Activated B cell treated with CpG ODN at 0.5 μM for 24 hours (primary cell): ENCODE measurements at regions of chr9 and their contacts with region 1.

Region 1: DNA sequence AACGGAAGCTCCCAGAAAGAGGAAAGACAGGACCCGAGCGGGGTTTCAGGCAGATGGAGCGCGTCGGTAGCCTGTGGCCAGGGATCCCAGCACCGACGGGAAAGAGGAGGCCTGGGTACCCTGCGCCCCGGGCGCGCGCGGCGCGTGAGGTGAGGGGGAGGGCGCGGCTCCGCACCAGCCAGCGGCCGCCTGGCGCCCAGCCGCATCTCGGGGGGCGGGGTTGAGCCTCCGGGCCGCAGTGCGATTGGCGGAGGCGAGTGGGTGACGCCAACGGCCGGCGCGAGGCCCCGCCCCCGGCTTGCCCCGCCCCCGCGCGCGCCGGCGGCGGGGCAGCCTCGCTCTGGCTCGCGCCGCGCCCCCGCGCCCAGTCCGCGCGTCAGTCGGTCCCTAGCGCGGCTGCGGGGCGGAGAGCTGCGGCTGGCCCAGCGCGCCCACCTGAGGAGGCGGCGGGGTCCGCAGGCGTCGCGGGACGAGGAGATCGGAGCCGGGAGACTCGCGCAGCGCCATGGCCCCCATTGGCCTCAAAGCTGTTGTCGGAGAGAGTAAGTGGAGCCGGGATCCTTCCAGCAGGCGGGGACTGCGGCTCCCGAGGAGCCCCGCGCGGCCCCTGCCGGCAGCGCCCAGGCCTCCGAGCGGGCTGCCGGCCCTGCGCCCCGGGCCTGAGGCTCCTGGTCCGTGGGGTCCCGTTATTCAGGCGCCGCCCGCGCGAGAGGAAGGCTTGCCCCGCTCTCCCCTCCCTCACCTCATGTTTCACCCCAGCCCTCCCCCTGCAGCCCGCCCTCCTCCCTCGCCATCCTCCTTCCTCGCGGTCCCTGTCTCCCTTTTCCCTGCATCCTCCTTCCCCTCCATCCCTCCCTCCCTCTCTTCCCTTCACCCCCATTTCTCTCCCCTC is at the start of gene STXBP1:
- DNase-seq: peak; percentile 88
- ATAC-seq: peak; percentile 92
- H3K4me3 Mint-ChIP-seq: peak within 1 kb of the TSS; percentile 90
- H3K27ac Mint-ChIP-seq: peak within 1 kb of the TSS; percentile 56
- H3K4me1 Mint-ChIP-seq: peaks cover 25% of the 10 kb centered on the region
- H3K27me3 Mint-ChIP-seq: peaks cover 37% of the 10 kb centered on the region
- CTCF ChIP-seq: no peak
- total RNA-seq, gene STXBP1: 0.20 and 0.73 TPM in 2 replicates

Region 2: GRCh38 chr9:127568971-127569885 is 42.9 kb before region 1 on chr9:
- CTCF ChIA-PET with region 1: no interaction called
- POLR2A ChIA-PET with region 1: no interaction called
- intact Hi-C with region 1: loop called (anchors 5 kb)
- DNase-seq: peak; percentile 68
- ATAC-seq: peak; percentile 93
- H3K4me3 Mint-ChIP-seq: peak overlapping the region; percentile 86
- H3K27ac Mint-ChIP-seq: peak overlapping the region; percentile 43
- H3K4me1 Mint-ChIP-seq: peaks cover 11% of the 10 kb centered on the region
- H3K27me3 Mint-ChIP-seq: no peaks in the 10 kb centered on the region
- CTCF ChIP-seq: no peak

Region 3: GRCh38 chr9:127676636-127677035 is 64.5 kb after region 1 on chr9:
- CTCF ChIA-PET with region 1: no interaction called
- POLR2A ChIA-PET with region 1: no interaction called
- intact Hi-C with region 1: no loop called
- DNase-seq: no peak
- ATAC-seq: no peak
- H3K4me3 Mint-ChIP-seq: no peak overlapping the region
- H3K27ac Mint-ChIP-seq: no peak overlapping the region
- H3K4me1 Mint-ChIP-seq: no peaks in the 10 kb centered on the region
- H3K27me3 Mint-ChIP-seq: peaks cover 14% of the 10 kb centered on the region
- CTCF ChIP-seq: no peak

Region 4: GRCh38 chr9:127715394-127716337 is 103.5 kb after region 1 on chr9 and contains the starts of genes PTRH1 and TTC16:
- CTCF ChIA-PET with region 1: no interaction called
- POLR2A ChIA-PET with region 1: interaction called, 3 read pairs
- intact Hi-C with region 1: loop called (anchors 1 kb)
- DNase-seq: peak; percentile 97
- ATAC-seq: peak; percentile 96
- H3K4me3 Mint-ChIP-seq: peak within 1 kb of the TSS; percentile 100
- H3K27ac Mint-ChIP-seq: peak within 1 kb of the TSS; percentile 92
- H3K4me1 Mint-ChIP-seq: peaks cover 21% of the 10 kb centered on the region
- H3K27me3 Mint-ChIP-seq: no peaks in the 10 kb centered on the region
- CTCF ChIP-seq: no peak
- total RNA-seq, gene PTRH1: 12.7 and 13.8 TPM in 2 replicates
- total RNA-seq, gene TTC16: not detected in 2 replicates

Region 5: DNA sequence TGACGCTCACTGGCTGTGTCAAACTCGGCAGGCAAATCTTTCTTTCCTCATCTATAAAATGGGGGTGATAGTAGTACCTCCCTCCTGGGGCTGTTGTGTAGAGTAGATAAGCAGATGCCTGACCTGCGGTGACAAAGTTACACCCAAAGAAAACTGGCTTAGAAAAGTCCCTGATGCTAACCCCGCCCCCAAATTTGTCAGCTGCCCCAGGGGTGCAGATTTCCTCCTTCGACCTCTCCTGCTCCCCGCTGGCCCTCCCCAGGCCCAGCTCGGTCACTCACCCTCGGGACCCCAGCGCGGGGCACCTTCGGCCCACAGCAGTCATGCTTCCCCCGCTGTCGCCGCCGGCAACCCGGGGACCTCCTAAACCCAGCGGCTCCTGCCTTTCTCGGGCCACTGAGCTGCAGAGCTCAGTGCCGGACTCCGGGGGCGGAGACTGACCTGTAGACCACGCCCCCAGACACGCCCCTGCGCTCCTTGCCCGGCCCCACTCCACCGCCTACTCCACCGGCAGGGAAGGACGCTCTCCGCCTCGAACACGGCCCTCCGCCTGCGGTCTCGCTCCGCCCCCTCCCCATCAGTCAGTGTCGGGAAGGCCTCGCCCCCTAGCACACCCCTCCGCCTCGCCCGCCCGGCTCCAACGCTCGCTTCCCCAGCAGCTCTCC is 158.9 kb after region 1 on chr9:
- CTCF ChIA-PET with region 1: no interaction called
- POLR2A ChIA-PET with region 1: no interaction called
- intact Hi-C with region 1: loop called (anchors 5 kb)
- DNase-seq: peak; percentile 98
- ATAC-seq: peak; percentile 90
- H3K4me3 Mint-ChIP-seq: peak overlapping the region; percentile 93
- H3K27ac Mint-ChIP-seq: peak overlapping the region; percentile 93
- H3K4me1 Mint-ChIP-seq: peaks cover 72% of the 10 kb centered on the region
- H3K27me3 Mint-ChIP-seq: no peaks in the 10 kb centered on the region
- CTCF ChIP-seq: no peak

Region 6: DNA sequence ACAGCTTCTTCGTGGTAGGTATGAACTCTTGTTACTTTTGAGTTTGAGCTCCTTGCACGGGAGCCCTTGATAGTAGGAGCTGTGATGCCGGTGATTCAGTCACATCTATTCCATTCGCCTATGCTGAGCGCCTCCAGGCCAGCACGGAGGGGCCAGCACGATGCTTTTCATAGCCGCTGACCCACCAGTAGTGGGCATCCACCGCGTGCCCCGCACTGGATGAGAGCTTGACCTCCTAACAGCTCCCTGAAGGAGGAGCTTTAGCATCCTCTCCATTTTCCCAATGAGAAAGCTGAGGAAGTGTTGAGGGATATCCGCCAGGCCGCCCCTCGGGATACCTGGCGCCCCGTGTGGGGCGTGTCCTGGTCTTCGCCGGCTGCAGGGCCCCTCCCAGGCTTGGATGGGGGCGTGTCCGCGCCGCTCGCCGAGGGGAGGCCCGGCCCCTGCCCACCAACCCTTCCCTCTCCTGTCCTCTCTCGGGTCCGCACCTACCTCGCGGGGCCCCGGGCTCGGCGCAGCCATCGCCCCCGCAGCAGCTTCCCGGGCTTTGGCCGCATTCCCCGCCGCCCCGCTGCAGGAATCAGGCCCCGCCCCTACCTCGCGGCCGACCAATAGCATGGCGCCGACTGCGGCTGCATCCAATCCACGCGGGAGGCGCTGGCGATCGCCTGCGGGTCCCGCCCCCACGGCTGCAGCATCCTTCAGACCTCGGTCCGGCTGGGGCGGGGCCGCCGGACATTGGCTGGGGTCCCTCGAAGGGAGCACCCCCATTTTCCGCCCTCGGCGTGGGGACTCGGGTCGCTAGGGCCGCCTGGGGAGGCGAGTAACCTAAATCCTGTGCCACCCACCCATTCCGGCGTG is 318.3 kb after region 1 on chr9 and contains the start of gene PIP5KL1:
- CTCF ChIA-PET with region 1: no interaction called
- POLR2A ChIA-PET with region 1: no interaction called
- intact Hi-C with region 1: loop called (anchors 5 kb)
- DNase-seq: peak; percentile 79
- ATAC-seq: peak; percentile 80
- H3K4me3 Mint-ChIP-seq: peak within 1 kb of the TSS; percentile 78
- H3K27ac Mint-ChIP-seq: no peak within 1 kb of the TSS
- H3K4me1 Mint-ChIP-seq: peaks cover 37% of the 10 kb centered on the region
- H3K27me3 Mint-ChIP-seq: peaks cover 3% of the 10 kb centered on the region
- CTCF ChIP-seq: no peak
- total RNA-seq, gene PIP5KL1: 1.7 and 1.8 TPM in 2 replicates

Region 7: DNA sequence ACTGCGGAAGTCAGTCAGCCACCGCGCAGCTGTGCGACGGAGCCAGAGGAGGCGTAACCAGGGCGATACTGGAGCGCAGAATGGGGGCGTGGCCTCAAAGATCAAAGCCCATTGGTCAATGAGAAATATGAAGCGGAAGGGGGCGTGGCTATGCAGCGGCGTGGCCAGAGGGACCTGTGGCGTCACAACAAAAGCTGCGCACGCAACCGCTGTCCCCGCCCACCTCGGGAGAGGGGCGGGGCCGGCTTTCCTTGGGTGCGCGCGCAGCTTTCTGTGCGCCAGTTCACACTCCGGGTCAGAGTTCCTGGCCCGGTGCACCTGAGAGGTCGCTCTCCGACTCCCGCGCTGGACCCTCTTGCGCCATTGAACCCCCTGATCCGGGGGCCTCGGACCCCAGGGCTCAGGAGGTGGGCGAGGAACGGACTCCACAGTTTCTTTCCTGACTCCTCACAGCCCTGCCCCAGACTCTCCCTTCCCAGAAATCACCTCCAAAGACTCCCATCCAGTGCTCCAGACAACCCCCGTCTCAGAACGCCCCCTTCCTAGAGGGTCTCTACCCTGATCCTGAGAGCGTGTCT is 663.9 kb after region 1 on chr9 and contains the starts of genes GOLGA2 and SWI5:
- CTCF ChIA-PET with region 1: no interaction called
- POLR2A ChIA-PET with region 1: no interaction called
- intact Hi-C with region 1: no loop called
- DNase-seq: peak; percentile 96
- ATAC-seq: peak; percentile 95
- H3K4me3 Mint-ChIP-seq: peak within 1 kb of the TSS; percentile 97
- H3K27ac Mint-ChIP-seq: peak within 1 kb of the TSS; percentile 92
- H3K4me1 Mint-ChIP-seq: peaks cover 27% of the 10 kb centered on the region
- H3K27me3 Mint-ChIP-seq: no peaks in the 10 kb centered on the region
- CTCF ChIP-seq: no peak
- total RNA-seq, gene GOLGA2: 46.0 and 53.5 TPM in 2 replicates
- total RNA-seq, gene SWI5: 7.2 and 10.4 TPM in 2 replicates

Region 8: DNA sequence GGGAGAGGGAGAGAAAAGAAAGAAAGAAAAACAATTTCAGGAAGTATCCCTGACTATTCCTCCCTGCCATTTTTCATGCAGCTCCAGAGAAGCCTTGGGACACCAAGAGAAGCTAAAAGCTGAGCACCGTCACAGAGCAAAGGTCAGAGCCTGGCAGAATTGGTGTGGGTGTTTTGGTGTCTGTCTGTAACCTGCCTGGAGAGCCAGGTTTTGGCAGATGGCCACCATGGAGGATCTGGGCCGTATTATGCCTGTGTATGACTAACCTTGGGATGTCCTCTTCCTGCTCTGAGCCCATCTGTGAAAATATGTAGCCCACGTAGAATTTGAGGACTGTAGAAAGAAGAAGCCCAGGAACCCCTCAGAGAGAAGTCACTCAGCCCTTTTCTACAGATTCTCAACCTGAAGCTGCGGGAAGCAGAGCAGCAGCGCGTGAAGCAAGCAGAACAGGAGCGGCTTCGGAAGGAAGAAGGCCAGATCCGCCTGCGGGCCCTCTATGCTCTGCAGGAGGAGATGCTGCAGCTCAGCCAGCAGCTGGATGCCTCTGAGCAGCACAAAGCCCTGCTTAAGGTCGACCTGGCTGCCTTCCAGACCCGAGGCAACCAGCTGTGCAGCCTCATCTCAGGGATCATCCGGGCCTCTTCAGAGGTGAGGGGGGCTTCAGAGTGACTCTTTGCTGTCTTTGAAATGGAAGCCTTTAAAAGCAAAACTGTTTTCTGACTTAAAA is 911.2 kb after region 1 on chr9:
- CTCF ChIA-PET with region 1: no interaction called
- POLR2A ChIA-PET with region 1: no interaction called
- intact Hi-C with region 1: no loop called
- DNase-seq: no peak
- ATAC-seq: no peak
- H3K4me3 Mint-ChIP-seq: no peak overlapping the region
- H3K27ac Mint-ChIP-seq: no peak overlapping the region
- H3K4me1 Mint-ChIP-seq: no peaks in the 10 kb centered on the region
- H3K27me3 Mint-ChIP-seq: no peaks in the 10 kb centered on the region
- CTCF ChIP-seq: no peak